ENCODE measurements at regions of chr12 and their contacts with region 1.

Region 1: DNA sequence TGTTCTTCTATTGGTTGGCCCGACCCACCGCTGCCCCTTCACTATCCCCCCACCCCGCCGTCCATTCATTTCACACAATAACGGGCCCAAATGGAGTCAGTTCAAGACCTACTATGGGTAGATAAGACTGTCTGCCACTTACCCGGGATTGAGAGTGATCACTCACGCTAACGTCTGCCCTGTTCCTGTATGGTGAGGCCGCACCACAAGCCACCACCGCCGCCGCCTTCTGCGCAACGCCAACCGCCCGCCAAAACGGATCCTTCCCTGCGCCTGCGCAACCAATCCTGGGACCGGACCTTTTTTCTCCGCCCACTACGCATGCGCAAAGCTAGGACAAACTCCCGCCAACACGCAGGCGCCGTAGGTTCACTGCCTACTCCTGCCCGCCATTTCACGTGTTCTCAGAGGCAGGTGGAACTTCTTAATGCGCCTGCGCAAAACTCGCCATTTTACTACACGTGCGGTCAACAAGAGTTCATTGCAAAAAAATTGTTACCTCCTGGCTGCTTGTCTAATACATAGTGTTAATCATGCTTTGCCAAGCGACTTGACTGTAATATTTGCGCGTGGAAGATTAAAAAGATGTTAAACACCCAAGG is at the start of gene CBX5:
- DNase-seq: peak; percentile 83
- H3K4me3 ChIP-seq: peak within 1 kb of the TSS; percentile 92
- CTCF ChIP-seq: no peak

Region 2: GRCh38 chr12:54060975-54061778 is 218.8 kb before region 1 on chr12:
- CTCF ChIA-PET with region 1: no interaction called
- POLR2A ChIA-PET with region 1: no interaction called
- DNase-seq: no peak
- H3K4me3 ChIP-seq: no peak overlapping the region
- CTCF ChIP-seq: no peak

Region 3: DNA sequence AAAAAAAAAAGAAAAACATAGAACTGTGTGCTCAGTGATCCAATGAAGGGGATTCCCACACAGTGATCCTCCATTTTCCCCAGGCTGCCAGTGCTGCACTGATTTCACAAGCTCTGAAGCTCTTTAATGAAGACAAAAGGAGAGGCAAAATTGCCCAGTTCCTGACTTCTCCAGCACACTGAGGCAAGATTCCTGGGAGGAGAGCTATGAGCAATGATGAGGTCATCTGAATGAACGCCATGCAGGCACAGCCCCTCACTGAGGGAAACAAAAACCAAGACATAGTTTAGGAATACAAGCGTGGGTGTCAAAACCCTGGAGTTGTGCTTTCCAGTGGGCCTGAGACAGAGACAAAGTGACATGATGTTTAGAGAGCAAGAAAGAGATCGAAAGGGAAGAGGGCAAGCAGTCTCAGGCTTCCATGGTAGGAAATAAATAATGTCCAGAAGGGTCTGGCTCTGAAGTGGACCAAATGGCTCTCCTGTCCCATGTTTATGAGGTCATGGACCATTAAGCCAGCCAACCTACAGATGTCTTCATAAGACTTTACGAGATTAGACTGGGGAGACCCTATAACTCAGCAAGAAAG is 50.2 kb before region 1 on chr12:
- CTCF ChIA-PET with region 1: interaction called, 3 read pairs
- POLR2A ChIA-PET with region 1: interaction called, 10 read pairs
- DNase-seq: peak; percentile 91
- H3K4me3 ChIP-seq: no peak overlapping the region
- CTCF ChIP-seq: no peak

Region 4: DNA sequence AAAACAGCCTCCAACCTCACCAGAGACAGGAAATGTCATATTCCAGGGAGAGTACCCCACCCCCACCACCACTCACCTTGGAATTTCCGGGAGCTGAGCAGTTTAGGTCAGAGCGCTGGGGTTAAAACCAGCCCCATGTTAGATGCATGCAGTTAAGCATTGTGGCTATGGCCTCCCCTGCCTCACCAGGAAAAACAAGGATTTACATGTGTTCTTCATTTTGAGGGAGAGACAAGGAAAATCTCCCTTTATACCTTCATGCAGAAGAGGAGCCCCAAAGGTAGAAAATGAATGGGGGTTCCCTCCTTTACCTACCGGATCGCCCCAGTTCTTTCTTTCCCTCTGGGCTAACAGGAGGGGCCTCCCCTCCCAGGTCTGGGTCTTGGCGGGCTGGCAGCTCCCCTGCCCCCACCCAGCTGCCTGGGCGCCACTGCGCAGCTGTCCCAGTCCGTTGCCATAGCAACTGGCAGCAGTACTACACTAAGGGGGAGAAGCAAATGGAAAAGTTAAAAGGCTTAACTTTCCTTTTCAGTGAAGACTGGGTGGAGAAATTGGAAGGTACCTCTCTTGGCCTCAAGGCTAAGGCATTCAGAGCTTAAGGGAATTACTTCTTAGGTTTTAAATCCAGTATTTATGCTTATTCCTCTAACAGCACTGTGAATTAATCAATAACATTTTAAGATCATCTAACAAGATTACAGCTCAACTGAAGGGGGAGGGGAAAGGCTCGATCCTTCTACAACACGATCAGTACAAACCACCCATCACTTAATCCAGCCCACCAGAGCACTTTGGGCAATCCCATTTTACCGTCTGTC is 20.6 kb before region 1 on chr12:
- CTCF ChIA-PET with region 1: interaction called, 6 read pairs
- POLR2A ChIA-PET with region 1: interaction called, 25 read pairs
- DNase-seq: no peak
- H3K4me3 ChIP-seq: peak overlapping the region; percentile 2
- CTCF ChIP-seq: no peak

Region 5: DNA sequence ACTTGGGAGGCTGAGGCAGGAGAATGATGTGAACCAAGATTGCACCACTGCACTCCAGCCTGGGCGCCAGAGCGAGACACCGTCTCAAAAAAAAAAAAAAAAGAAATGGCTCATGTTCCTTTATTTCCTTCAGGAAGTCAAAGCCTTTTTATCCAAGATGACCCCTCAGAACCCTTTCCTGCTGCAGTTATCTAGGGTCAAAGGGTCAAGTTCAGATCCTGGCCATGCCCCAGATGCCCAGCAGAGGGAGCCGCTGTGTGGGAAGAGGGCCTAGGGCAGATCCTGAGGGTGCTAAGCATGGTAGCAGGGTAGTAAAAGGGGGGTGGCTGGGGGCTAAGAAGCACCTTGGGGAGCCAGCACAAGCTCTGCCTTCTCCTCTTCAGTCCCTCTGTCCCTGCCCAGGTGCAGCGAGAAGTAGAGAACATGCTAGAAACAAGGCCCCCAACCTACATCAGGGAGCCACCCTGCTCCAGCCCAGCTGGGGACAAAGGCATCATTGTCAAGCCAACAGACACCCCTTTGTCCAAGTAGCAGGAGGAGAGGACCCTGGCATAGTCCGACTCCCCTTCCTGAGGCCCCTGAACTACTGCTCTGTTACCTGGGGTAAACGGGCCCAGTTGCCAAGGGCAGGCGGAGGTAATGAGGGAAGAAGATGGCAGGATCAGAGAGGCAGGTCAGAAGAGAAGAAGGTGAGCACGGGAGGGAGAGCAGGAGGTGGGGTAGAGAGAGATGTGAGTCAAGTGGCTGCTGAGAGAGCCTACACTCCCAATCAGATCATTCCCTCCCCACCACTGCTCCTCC is 14.4 kb after region 1 on chr12:
- CTCF ChIA-PET with region 1: interaction called, 42 read pairs
- POLR2A ChIA-PET with region 1: interaction called, 33 read pairs
- DNase-seq: no peak
- H3K4me3 ChIP-seq: no peak overlapping the region
- CTCF ChIP-seq: peak; percentile 87

Measured in AG04449 (cell line).